ENCODE measurements at regions of chr10 and their contacts with region 1.

Region 1: DNA sequence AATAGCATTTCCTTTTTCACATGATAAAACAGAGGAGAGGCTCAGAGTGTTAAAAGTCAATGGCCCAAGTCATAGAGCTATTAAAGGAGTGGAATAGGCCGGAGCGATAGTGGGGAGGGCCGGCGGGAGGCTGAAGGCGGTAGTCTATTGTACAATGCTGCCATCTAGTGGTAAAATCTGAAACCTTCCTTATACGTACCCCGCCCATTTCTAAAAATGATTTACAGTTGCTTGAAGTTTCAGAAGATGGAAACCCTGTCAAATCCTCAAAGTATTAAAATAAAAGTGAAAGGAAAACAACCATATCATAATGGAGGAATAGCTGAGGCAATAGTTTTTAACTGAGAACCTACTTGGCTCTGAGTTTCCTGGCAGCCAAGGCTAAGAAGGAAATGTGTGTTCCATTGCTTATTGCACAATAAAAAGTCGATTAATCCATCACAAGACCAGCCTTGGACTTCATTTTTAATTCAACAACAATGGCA is 209.1 kb downstream of the CCSER2 start:
- DNase-seq: peak; percentile 82

Region 2: DNA sequence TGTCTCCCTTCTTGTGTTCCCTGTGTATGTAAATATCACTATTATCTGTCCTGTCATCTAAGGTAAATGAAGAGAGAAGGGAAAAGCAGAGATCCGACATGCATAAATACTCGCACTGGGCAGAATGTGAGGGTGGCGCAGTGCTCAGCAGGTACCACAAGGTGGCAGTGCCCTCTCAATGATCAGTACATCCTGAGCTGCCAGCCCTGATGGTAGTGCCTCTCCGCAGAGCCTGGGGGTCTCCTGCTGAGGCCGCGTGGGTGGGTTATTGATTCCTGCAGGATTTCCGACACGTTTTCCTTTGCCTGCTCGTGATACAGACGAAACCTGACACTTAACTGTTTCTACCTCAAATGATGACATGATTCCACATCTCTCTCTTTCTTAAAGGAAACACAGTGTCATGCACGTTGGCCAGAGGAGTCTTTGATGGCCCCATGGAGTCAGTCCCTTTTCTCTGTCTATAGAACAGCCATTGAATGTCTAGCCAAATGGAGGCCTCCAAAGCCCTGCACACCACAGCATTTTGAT is 272.8 kb before region 1 on chr10:
- in situ Hi-C with region 1: loop called (anchors 10 kb)
- DNase-seq: peak; percentile 75

Region 3: DNA sequence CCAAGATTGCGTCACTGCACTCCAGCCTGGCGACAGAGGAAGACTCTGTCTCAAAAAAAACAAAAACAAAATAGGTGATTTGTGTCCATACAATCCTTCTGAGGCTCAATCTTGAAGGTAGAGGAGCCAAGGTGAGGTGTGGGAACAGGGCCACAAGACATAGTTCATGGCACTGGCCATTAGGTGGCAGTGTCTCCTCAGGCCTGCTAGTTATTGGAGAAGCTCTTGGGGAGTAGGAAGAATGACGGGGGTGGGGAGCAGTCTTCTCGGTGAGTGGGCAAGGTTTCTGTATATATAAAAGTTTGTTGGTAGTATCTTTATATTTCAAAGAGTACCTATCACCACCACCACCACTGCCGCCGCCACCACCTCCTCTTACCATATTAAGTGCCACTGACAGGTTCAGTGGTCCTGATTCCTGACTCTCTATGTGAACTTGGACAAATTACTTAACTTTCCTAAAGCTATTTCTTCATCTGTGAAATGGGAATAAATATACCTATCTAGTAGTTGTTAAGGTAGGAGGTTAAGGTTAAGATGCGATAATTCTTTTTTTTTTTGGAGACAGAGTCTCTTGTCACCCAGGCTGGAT is 185.1 kb before region 1 on chr10:
- in situ Hi-C with region 1: loop called (anchors 25 kb)
- DNase-seq: peak; percentile 63

Region 4: GRCh38 chr10:84599254-84599653 is 61.8 kb after region 1 on chr10:
- in situ Hi-C with region 1: no loop called
- DNase-seq: no peak